Heart left ventricle (tissue), 16 donors: ENCODE measurements at regions of chr2 and their contacts with region 1.

Region 1: GRCh38 chr2:49812730-49813129 is 658.4 kb upstream of the FSHR start:
- DNase-seq: no peak
- ATAC-seq: peak; percentile 97 to 99 (median 98)
- H3K4me3 ChIP-seq: no peak overlapping the region
- H3K27ac ChIP-seq: peak overlapping the region in 10 of 12 donors; percentile 7 to 87 (median 76)
- H3K4me1 ChIP-seq: peaks cover 0 to 23% (median 1%) of the 10 kb centered on the region in 12 donors
- H3K27me3 ChIP-seq: no peaks in the 10 kb centered on the region
- CTCF ChIP-seq: no peak
- POLR2A ChIP-seq: no peak

Region 2: GRCh38 chr2:49444005-49444404 is 368.7 kb before region 1 on chr2:
- intact Hi-C with region 1: no loop called
- DNase-seq: no peak
- ATAC-seq: no peak
- H3K4me3 ChIP-seq: no peak overlapping the region
- H3K27ac ChIP-seq: no peak overlapping the region
- H3K4me1 ChIP-seq: no peaks in the 10 kb centered on the region
- H3K27me3 ChIP-seq: peaks cover 0 to 10% (median 0%) of the 10 kb centered on the region in 9 donors
- CTCF ChIP-seq: no peak
- POLR2A ChIP-seq: no peak

Region 3: GRCh38 chr2:49598231-49598630 is 214.5 kb before region 1 on chr2:
- intact Hi-C with region 1: no loop called
- DNase-seq: no peak
- ATAC-seq: peak; percentile 80 to 91 (median 90)
- H3K4me3 ChIP-seq: no peak overlapping the region
- H3K27ac ChIP-seq: peak overlapping the region in 2 of 12 donors; percentile 26 to 32
- H3K4me1 ChIP-seq: peaks cover 0 to 5% (median 0%) of the 10 kb centered on the region in 12 donors
- H3K27me3 ChIP-seq: no peaks in the 10 kb centered on the region
- CTCF ChIP-seq: no peak
- POLR2A ChIP-seq: no peak

Region 4: GRCh38 chr2:49831698-49832367 is 19.1 kb after region 1 on chr2:
- intact Hi-C with region 1: loop called in 1 of 10 experiments (anchors 1 kb)
- DNase-seq: no peak
- ATAC-seq: no peak
- H3K4me3 ChIP-seq: no peak overlapping the region
- H3K27ac ChIP-seq: peak overlapping the region in 4 of 12 donors; percentile 1 to 51 (median 34)
- H3K4me1 ChIP-seq: peaks cover 0 to 4% (median 0%) of the 10 kb centered on the region in 12 donors
- H3K27me3 ChIP-seq: no peaks in the 10 kb centered on the region
- CTCF ChIP-seq: no peak
- POLR2A ChIP-seq: no peak

Region 5: DNA sequence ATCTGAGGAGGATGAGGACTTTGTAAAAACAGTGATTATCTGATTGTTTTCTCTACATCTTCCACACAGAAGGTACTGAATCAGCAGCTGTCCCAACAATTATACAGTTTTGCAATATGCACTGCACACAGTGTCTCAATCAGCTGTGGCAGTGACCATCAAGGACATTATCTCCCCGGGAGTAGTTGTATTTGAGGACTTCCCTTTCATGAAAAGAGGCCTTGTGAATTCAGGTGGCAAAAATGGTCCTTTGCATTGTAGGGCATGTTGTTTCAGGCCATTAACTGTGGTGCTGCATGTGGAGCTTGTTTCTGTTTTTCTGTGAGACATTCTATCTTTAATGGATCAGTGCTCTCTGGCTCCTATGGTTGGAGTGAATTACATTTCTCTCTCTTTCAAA is 121.0 kb after region 1 on chr2:
- intact Hi-C with region 1: loop called in 2 of 10 experiments (anchors 5 to 10 kb)
- DNase-seq: no peak
- ATAC-seq: peak in 2 of 4 donors; percentile 22 to 41
- H3K4me3 ChIP-seq: no peak overlapping the region
- H3K27ac ChIP-seq: no peak overlapping the region
- H3K4me1 ChIP-seq: peaks cover 0 to 4% (median 0%) of the 10 kb centered on the region in 12 donors
- H3K27me3 ChIP-seq: no peaks in the 10 kb centered on the region
- CTCF ChIP-seq: no peak
- POLR2A ChIP-seq: no peak